ENCODE measurements at regions of chr9 and their contacts with region 1.

Region 1: GRCh38 chr9:4344946-4345345 is 45.1 kb upstream of the GLIS3 start:
- DNase-seq: no peak
- ATAC-seq: no peak
- H3K4me3 ChIP-seq: no peak overlapping the region
- H3K27ac ChIP-seq: no peak overlapping the region
- H3K4me1 ChIP-seq: no peaks in the 10 kb centered on the region
- H3K27me3 ChIP-seq: no peaks in the 10 kb centered on the region
- CTCF ChIP-seq: no peak
- POLR2A ChIP-seq: no peak
- RAD21 ChIP-seq: no peak

Region 2: DNA sequence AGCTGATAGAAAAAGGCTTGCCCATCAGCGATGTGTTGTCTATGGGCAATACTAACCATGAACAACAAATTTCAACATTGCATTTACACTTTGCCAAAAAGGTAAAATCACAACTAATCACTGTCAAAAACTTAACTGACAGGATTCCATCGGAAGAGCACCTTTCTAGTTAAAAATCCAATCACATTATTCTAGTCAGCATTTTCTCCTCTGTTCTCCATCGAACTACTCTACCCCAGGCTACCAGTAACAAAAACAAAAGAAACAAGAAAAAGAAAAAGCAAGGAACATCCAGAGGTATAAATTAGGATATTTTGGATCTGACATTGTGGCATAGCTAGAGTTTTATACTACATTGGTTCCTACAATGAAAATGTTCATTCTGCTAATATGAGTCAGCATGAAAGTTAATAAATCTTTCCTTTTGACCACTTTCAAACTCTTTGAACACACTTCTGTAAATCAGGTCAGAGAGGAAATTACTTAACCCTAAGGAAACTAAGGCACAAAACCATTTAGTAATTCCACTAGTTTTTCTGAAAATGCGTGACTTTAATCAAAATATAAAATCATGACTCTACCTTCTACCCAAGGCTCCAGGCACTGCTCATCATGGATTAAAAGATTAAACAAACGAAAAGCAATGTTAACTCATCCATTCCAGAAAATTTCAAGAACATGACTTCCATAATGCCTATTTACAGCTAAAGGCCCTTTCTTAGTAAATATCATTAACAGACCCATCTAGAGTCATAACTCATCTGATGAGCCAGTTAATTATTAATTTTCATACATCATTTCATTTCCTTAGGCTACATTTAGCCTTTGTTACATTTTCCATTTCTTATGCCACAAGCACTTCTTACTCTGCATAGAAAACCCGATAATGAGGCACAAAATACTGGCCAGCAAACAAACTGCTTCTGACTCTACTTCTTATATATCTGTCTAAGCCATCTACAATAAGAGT is 55.2 kb before region 1 on chr9:
- CTCF ChIA-PET with region 1: interaction called, 3 read pairs
- POLR2A ChIA-PET with region 1: no interaction called
- dilution Hi-C with region 1: no loop called
- in situ Hi-C with region 1: loop called (anchors 10 kb)
- intact Hi-C with region 1: no loop called
- DNase-seq: peak; percentile 18
- ATAC-seq: no peak
- H3K4me3 ChIP-seq: no peak overlapping the region
- H3K27ac ChIP-seq: no peak overlapping the region
- H3K4me1 ChIP-seq: peaks cover 7% of the 10 kb centered on the region
- H3K27me3 ChIP-seq: no peaks in the 10 kb centered on the region
- CTCF ChIP-seq: no peak
- POLR2A ChIP-seq: no peak
- RAD21 ChIP-seq: no peak

Measured in IMR-90 (cell line).